G401 (cell line): ENCODE measurements at regions of chr2 and their contacts with region 1.

Region 1: GRCh38 chr2:20635675-20636584 is 15.0 kb downstream of the HS1BP3 start:
- DNase-seq: peak; percentile 85

Region 2: GRCh38 chr2:20443276-20443920 is 192.5 kb before region 1 on chr2:
- in situ Hi-C with region 1: loop called (anchors 5 kb)
- DNase-seq: peak; percentile 81